GM12878 (cell line): ENCODE measurements at regions of chr1 and their contacts with region 1.

Region 1: GRCh38 chr1:206982216-206982615 is 12.0 kb upstream of the FCAMR start:
- DNase-seq: no peak
- ATAC-seq: peak; percentile 98
- H3K4me3 ChIP-seq: no peak overlapping the region
- H3K27ac ChIP-seq: no peak overlapping the region
- H3K4me1 ChIP-seq: no peaks in the 10 kb centered on the region
- H3K27me3 ChIP-seq: no peaks in the 10 kb centered on the region; a peak in 1 of 4 replicates
- CTCF ChIP-seq: peak; percentile 85 to 94 (median 92)
- EP300 ChIP-seq: no peak
- POLR2A ChIP-seq: no peak
- RAD21 ChIP-seq: peak; percentile 97

Region 2: GRCh38 chr1:206658264-206658980 is 323.8 kb before region 1 on chr1:
- CTCF ChIA-PET with region 1: interaction called, 55 read pairs
- POLR2A ChIA-PET with region 1: no interaction called
- RAD21 ChIA-PET with region 1: interaction called, 22 read pairs
- SMC1A ChIA-PET with region 1: interaction called, 16 read pairs
- in situ Hi-C with region 1: no loop called
- intact Hi-C with region 1: no loop called
- DNase-seq: no peak
- ATAC-seq: peak; percentile 93
- H3K4me3 ChIP-seq: no peak overlapping the region
- H3K27ac ChIP-seq: no peak overlapping the region
- H3K4me1 ChIP-seq: peaks cover 9% of the 10 kb centered on the region
- H3K27me3 ChIP-seq: no peaks in the 10 kb centered on the region
- CTCF ChIP-seq: peak; percentile 74 to 99 (median 98)
- EP300 ChIP-seq: no peak
- POLR2A ChIP-seq: no peak
- RAD21 ChIP-seq: peak; percentile 62

Region 3: GRCh38 chr1:206803221-206803730 is 178.9 kb before region 1 on chr1:
- CTCF ChIA-PET with region 1: interaction called, 198 read pairs
- POLR2A ChIA-PET with region 1: no interaction called
- RAD21 ChIA-PET with region 1: interaction called, 79 read pairs
- SMC1A ChIA-PET with region 1: interaction called, 120 read pairs
- in situ Hi-C with region 1: no loop called
- intact Hi-C with region 1: no loop called
- DNase-seq: peak; percentile 98
- ATAC-seq: peak; percentile 97
- H3K4me3 ChIP-seq: no peak overlapping the region
- H3K27ac ChIP-seq: peak overlapping the region; percentile 55
- H3K4me1 ChIP-seq: peaks cover 20% of the 10 kb centered on the region
- H3K27me3 ChIP-seq: no peaks in the 10 kb centered on the region
- CTCF ChIP-seq: no peak
- EP300 ChIP-seq: peak; percentile 98 to 99
- POLR2A ChIP-seq: peak; percentile 26; the same call in 1 of the 2 replicates
- RAD21 ChIP-seq: peak; percentile 9; the same call in 1 of the 2 replicates

Region 4: GRCh38 chr1:206865013-206865671 is 117.1 kb before region 1 on chr1 and contains the start of gene IL20:
- CTCF ChIA-PET with region 1: interaction called, 100 read pairs
- POLR2A ChIA-PET with region 1: no interaction called
- RAD21 ChIA-PET with region 1: interaction called, 9 read pairs
- SMC1A ChIA-PET with region 1: interaction called, 23 read pairs
- in situ Hi-C with region 1: loop called (anchors 5 kb)
- intact Hi-C with region 1: loop called (anchors 2 kb)
- DNase-seq: peak; percentile 31
- ATAC-seq: peak; percentile 95
- H3K4me3 ChIP-seq: no peak within 1 kb of the TSS
- H3K27ac ChIP-seq: no peak within 1 kb of the TSS
- H3K4me1 ChIP-seq: no peaks in the 10 kb centered on the region
- H3K27me3 ChIP-seq: peaks cover 0 to 2% of the 10 kb centered on the region in 2 experiments; a peak in 1 of 4 replicates
- CTCF ChIP-seq: peak; percentile 81 to 95 (median 93)
- EP300 ChIP-seq: no peak
- POLR2A ChIP-seq: no peak
- RAD21 ChIP-seq: peak; percentile 69
- polyA plus RNA-seq, gene IL20: 0.08 TPM in 1 of 2 experiments, not detected in the other

Region 5: GRCh38 chr1:206935491-206936067 is 46.6 kb before region 1 on chr1:
- CTCF ChIA-PET with region 1: interaction called, 314 read pairs
- POLR2A ChIA-PET with region 1: interaction called, 4 read pairs
- RAD21 ChIA-PET with region 1: interaction called, 192 read pairs
- SMC1A ChIA-PET with region 1: interaction called, 148 read pairs
- in situ Hi-C with region 1: no loop called
- intact Hi-C with region 1: loop called (anchors 1 kb)
- DNase-seq: no peak
- ATAC-seq: peak; percentile 64
- H3K4me3 ChIP-seq: no peak overlapping the region
- H3K27ac ChIP-seq: no peak overlapping the region
- H3K4me1 ChIP-seq: peaks cover 27% of the 10 kb centered on the region
- H3K27me3 ChIP-seq: no peaks in the 10 kb centered on the region
- CTCF ChIP-seq: peak; percentile 44 to 71 (median 57)
- EP300 ChIP-seq: no peak
- POLR2A ChIP-seq: no peak
- RAD21 ChIP-seq: peak; percentile 36; the same call in 1 of the 2 replicates

Region 6: DNA sequence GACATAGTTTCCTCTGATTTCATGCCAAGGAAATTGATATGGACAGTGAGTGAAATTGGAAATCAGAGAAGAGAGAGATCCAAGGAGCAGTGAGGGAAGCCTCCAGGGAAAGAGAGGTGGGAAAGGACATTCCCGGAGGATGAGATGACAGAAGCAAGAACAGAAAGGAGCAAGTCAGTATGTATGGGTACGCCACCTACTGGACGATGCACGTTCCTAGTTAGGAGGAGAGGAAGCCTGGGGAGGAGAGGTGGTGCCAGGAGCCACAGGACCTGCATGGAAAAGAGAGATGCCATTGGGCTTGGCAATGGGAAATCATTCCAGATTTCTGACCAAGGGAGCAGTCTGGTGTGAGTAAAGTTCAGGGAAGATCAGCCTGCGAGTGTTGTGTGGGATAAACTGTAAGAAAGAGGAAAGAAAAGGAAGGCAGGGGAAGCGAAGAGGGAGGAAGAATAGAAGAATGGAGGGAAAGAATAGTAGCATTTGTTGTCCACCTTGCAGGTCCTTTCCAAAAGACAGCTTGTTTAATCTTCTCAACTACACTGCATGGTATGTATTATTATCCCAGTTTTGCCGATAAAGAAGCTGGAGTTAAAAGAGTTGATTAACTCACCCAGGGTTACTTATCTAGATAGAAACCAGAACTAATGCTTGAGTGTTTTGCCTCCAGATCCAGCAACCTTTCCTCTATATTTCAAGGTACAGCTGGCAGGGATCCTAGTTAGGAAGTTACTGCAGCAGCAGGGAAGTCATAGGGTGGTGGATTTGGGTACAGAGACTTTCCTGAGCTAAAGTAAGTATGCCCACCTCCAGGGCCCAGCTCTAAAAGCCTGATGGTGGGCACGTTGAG is 23.0 kb after region 1 on chr1:
- CTCF ChIA-PET with region 1: interaction called, 20 read pairs
- POLR2A ChIA-PET with region 1: interaction called, 3 read pairs
- RAD21 ChIA-PET with region 1: interaction called, 4 read pairs
- SMC1A ChIA-PET with region 1: interaction called, 9 read pairs
- in situ Hi-C with region 1: no loop called
- intact Hi-C with region 1: no loop called
- DNase-seq: peak; percentile 7
- ATAC-seq: peak; percentile 96
- H3K4me3 ChIP-seq: no peak overlapping the region
- H3K27ac ChIP-seq: no peak overlapping the region
- H3K4me1 ChIP-seq: no peaks in the 10 kb centered on the region
- H3K27me3 ChIP-seq: peaks cover 2 to 3% of the 10 kb centered on the region in 2 experiments
- CTCF ChIP-seq: peak; percentile 78 to 90 (median 85)
- EP300 ChIP-seq: no peak
- POLR2A ChIP-seq: no peak
- RAD21 ChIP-seq: peak; percentile 41; the same call in 1 of the 2 replicates